PC-3 (cell line): ENCODE measurements at regions of chr12 and their contacts with region 1.

Region 1: GRCh38 chr12:12916135-12916944 is 25.0 kb downstream of the GPRC5A start:
- DNase-seq: peak; percentile 81
- ATAC-seq: peak; percentile 64
- H3K4me3 ChIP-seq: no peak overlapping the region
- H3K27ac ChIP-seq: no peak overlapping the region
- H3K4me1 ChIP-seq: peaks cover 22% of the 10 kb centered on the region; the same call in 1 of the 2 replicates
- H3K27me3 ChIP-seq: no peaks in the 10 kb centered on the region
- CTCF ChIP-seq: peak; percentile 86

Region 2: GRCh38 chr12:12899530-12900380 is 16.6 kb before region 1 on chr12:
- CTCF ChIA-PET with region 1: no interaction called
- POLR2A ChIA-PET with region 1: interaction called, 22 read pairs
- intact Hi-C with region 1: no loop called
- DNase-seq: peak; percentile 82
- ATAC-seq: peak; percentile 38
- H3K4me3 ChIP-seq: peak overlapping the region; percentile 32
- H3K27ac ChIP-seq: peak overlapping the region; percentile 83
- H3K4me1 ChIP-seq: peaks cover 84% of the 10 kb centered on the region
- H3K27me3 ChIP-seq: no peaks in the 10 kb centered on the region
- CTCF ChIP-seq: no peak

Region 3: DNA sequence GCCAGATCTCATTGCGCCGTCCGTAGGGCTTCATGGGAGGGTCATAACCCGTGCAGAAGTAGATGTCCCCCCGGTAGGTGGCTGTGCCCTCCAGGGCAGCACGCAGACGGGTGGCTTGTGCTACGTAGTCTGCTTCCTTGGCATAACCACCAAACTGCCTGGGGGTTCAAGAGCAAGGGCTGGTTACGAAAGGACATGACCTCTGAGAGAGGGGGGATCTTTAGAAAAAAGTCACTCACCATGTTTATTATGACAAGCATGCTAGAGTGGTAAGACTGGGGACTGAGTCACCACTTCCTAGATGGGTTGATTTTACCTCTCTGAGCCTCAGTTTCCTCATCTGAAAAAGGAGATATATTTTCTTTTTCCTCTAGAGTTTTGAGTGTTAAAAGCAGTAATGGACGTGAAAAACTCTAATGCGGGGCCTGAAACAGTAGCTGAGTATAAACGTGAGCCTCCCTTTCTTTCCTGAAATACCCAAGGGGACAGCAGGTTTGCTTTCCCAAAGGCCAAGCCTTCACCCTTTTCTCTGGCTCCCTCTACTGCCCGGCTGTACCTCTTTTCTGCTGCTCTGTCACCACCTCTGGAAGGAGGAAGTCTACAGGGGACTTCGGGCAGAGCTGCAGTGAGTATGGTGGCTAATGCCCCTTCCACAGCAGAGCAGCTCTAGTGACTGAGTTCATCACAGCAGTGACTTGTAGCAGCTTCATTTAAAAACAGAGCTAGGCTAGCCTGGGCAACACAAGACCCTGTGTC is 59.2 kb after region 1 on chr12:
- CTCF ChIA-PET with region 1: interaction called, 4 read pairs
- POLR2A ChIA-PET with region 1: no interaction called
- intact Hi-C with region 1: loop called (anchors 1 kb)
- DNase-seq: peak; percentile 53
- ATAC-seq: peak; percentile 39; the same call in 1 of the 2 replicates
- H3K4me3 ChIP-seq: no peak overlapping the region; the same call in 1 of the 2 replicates
- H3K27ac ChIP-seq: peak overlapping the region; percentile 72
- H3K4me1 ChIP-seq: peaks cover 30% of the 10 kb centered on the region
- H3K27me3 ChIP-seq: no peaks in the 10 kb centered on the region
- CTCF ChIP-seq: peak; percentile 69

Region 4: DNA sequence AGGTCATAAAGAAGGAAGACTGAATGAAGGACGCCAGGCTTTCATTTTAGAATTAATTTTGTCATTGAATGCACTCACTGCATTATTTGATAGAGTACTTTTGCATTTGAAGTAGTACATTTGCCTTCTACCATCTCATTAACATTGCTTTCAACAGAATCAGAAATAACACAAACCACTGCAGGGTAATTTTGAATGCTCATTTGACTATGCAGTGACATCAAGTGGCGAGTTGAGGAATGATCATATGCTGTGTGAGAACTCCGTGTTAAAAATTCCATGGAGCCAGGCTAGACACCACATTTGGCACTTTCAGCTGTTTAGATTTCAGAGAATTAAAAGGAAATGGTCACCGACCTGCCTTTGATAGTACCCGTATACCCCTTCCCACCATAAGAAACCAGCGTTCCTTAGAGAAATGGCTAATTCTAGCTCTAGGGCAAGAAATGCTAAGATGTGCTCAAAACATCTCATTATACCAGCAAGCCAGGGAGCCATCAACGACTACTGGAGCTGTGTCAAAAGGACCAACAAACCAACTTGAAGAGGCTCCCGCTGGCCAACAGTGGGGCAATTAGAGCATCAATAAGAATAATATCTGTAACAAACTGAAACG is 67.2 kb after region 1 on chr12:
- CTCF ChIA-PET with region 1: interaction called, 3 read pairs
- POLR2A ChIA-PET with region 1: no interaction called
- intact Hi-C with region 1: loop called (anchors 1 kb)
- DNase-seq: peak; percentile 63
- ATAC-seq: peak; percentile 38; the same call in 1 of the 2 replicates
- H3K4me3 ChIP-seq: no peak overlapping the region
- H3K27ac ChIP-seq: no peak overlapping the region
- H3K4me1 ChIP-seq: peaks cover 15% of the 10 kb centered on the region
- H3K27me3 ChIP-seq: no peaks in the 10 kb centered on the region
- CTCF ChIP-seq: peak; percentile 77

Region 5: DNA sequence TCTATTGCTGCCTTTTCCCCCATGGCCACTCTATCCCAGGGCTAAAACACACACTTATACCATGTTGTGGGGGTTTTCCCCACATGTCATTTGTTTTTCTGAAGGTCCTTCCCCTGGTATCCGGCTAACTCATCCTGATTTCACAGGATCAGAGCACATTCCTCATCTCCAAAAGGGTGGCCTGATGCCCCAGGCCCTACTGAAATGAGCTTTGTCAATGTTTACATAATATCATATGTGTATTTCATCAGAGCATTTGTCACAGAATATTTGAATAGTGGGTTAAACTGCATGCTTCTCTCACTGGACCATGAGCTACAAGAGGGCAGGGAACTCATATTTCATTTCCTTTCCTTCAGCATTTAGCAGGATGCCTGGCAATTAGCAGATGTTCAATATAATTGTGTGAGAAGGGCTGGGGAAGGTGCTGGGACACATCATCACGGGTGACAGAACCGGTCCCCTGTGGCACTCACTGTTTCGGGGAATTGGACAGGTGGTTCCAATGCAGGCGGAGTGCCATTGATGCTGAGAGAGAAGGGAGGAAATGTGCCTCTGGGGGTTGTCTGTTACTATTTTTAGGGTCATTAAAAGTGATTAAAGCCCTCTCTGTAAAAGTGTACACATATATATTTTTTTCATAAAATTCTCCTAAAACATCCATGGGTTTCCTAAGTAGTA is 307.0 kb after region 1 on chr12:
- CTCF ChIA-PET with region 1: no interaction called
- POLR2A ChIA-PET with region 1: no interaction called
- intact Hi-C with region 1: loop called (anchors 5 kb)
- DNase-seq: peak; percentile 94
- ATAC-seq: peak; percentile 84
- H3K4me3 ChIP-seq: no peak overlapping the region
- H3K27ac ChIP-seq: peak overlapping the region; percentile 84
- H3K4me1 ChIP-seq: peaks cover 31% of the 10 kb centered on the region
- H3K27me3 ChIP-seq: no peaks in the 10 kb centered on the region
- CTCF ChIP-seq: no peak